Endothelial cell of umbilical vein (primary cell): ENCODE measurements at regions of chrX and their contacts with region 1.

Region 1: GRCh38 chrX:22889819-22890218 is 109.9 kb upstream of the DDX53 start:
- DNase-seq: peak; percentile 50
- H3K4me3 ChIP-seq: peak overlapping the region in 1 of 3 experiments; percentile 11
- H3K27ac ChIP-seq: peak overlapping the region; percentile 15
- H3K4me1 ChIP-seq: peaks cover 13% of the 10 kb centered on the region
- H3K27me3 ChIP-seq: no peaks in the 10 kb centered on the region
- CTCF ChIP-seq: no peak
- POLR2A ChIP-seq: no peak

Region 2: DNA sequence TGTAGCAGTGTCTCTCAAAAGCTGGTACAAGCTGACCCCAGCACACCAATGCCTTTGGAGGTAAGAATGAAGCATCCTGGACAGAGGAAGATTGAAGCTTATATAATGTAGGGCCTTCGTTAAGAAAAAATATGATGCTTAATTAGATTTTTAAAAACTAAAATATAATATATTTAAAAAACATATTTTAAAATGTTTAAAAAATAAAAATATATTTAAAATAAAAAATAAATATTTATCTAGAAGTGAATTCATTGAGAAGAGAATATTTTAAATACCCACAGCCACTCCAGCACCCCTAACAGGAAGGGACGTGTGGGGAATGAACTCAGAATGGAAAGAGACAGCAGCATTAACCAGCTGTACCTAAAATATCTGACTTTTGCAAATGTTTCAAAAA is 44.8 kb after region 1 on chrX:
- CTCF ChIA-PET with region 1: no interaction called
- POLR2A ChIA-PET with region 1: no interaction called
- dilution Hi-C with region 1: no loop called
- intact Hi-C with region 1: no loop called
- DNase-seq: no peak
- H3K4me3 ChIP-seq: no peak overlapping the region
- H3K27ac ChIP-seq: no peak overlapping the region
- H3K4me1 ChIP-seq: no peaks in the 10 kb centered on the region
- H3K27me3 ChIP-seq: no peaks in the 10 kb centered on the region
- CTCF ChIP-seq: no peak
- POLR2A ChIP-seq: no peak

Region 3: GRCh38 chrX:22950269-22951266 is 60.7 kb after region 1 on chrX:
- CTCF ChIA-PET with region 1: no interaction called
- POLR2A ChIA-PET with region 1: no interaction called
- dilution Hi-C with region 1: no loop called
- intact Hi-C with region 1: loop called (anchors 5 kb)
- DNase-seq: peak; percentile 58
- H3K4me3 ChIP-seq: no peak overlapping the region
- H3K27ac ChIP-seq: peak overlapping the region; percentile 41
- H3K4me1 ChIP-seq: peaks cover 29% of the 10 kb centered on the region
- H3K27me3 ChIP-seq: no peaks in the 10 kb centered on the region
- CTCF ChIP-seq: no peak
- POLR2A ChIP-seq: no peak